BJ (cell line): ENCODE measurements at regions of chr1 and their contacts with region 1.

Region 1: GRCh38 chr1:107277022-107277421 is 136.2 kb downstream of the NTNG1 start:
- DNase-seq: peak; percentile 2
- H3K4me3 ChIP-seq: no peak overlapping the region
- H3K27me3 ChIP-seq: no peaks in the 10 kb centered on the region
- CTCF ChIP-seq: peak; percentile 68

Region 2: DNA sequence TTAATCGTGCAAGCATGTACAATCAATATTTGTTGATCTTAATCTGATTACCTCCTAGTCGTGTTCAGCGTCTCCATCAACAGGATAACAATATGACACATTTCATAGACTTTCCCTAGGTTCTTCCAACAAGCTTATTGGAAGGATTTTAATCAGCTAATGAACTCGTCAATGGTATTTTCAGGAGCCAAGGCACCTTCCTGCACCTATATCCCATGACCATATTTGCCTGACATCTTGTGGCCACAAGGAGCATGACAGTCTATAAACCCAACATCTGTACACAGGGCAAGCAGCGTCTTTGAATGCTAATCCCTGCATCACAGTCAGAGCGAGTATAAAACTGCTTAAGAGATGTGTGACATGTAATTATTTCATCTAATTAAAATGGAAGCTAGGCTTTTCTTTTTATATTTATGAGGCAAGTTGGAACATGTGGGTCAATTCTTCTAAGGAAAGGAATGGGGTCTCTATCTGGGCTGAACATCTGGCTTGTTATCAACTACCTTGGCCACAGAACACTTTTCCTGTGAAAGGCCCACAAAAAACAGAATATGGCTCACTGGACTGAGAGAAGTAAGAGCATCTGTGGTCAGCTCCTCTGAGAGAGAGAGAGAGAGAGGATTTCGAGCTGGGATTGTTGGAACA is 252.6 kb after region 1 on chr1:
- CTCF ChIA-PET with region 1: interaction called, 57 read pairs
- POLR2A ChIA-PET with region 1: no interaction called
- DNase-seq: no peak
- H3K4me3 ChIP-seq: no peak overlapping the region
- H3K27me3 ChIP-seq: no peaks in the 10 kb centered on the region
- CTCF ChIP-seq: peak; percentile 81